ENCODE measurements at regions of chr11 and their contacts with region 1.

Region 1: DNA sequence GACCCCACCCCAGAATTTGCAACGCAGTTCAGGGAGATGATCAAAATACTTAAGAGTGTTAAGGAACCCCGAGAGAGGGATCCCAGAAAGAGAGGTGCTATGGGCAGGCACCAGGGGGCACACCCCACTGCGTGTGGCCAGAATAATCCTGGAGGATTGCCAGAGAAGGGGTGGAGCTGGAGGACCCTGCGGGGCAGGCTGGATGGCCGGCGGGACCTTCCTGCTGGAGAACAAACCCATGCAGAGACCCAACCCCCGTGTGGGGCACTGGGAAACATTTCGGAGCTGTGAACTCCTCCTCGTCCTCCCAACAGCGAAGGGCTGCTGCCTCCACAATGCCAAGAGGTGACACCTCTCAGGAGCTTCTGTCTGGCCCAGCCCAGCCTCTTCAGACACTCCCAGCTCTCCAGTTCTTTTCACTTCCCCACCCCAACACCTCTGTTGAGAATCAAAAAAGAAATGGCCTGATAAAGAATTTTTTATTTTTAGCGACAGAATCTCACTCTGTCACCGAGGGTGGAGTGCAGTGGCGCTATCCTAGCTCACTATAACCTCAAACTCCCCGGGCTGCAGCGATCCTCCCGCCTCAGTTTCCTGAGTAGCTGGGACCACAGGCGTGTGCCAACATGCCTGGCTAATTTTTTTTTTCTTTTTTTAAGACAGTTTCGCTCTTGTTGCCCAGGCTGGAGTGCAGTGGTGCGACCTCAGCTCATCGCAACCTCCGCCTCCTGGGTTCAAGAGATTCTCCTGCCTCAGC is 25.6 kb downstream of the RHOD start:
- DNase-seq: no peak
- ATAC-seq: peak; percentile 18 to 61 (median 34)
- H3K4me3 ChIP-seq: peak overlapping the region in 7 of 10 donors; percentile 7 to 34 (median 19)
- H3K27ac ChIP-seq: no peak overlapping the region
- H3K4me1 ChIP-seq: peaks cover 6 to 17% (median 12%) of the 10 kb centered on the region in 9 donors
- H3K27me3 ChIP-seq: peaks cover 0 to 6% (median 0%) of the 10 kb centered on the region in 7 donors
- CTCF ChIP-seq: no peak

Region 2: DNA sequence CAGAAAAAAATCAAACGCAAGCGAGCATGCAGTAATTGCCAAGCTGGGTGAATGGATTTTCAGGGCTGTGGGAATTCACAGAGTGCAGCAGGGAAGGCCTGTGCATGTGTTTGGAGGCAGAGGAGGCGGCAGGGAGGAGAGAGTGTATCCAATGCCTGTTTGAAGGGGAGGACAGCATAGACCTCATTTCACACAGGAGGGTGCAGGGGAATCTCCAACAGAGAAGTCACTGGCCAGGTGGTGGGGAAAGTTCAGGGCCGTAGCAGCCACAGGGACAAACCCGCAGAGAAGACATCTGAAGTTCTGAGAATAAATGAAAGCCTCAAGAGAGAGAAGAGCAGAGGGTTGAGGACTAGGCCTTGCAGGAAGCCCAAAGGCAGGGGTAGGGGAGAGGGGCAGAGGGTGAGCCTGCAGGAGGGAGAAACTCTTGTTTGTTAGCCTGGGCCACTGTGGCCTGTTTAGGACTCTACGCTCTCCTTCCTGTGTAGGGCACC is 17.7 kb after region 1 on chr11:
- intact Hi-C with region 1: loop called in 1 of 10 experiments (anchors 1 kb)
- DNase-seq: no peak
- ATAC-seq: no peak
- H3K4me3 ChIP-seq: no peak overlapping the region
- H3K27ac ChIP-seq: no peak overlapping the region
- H3K4me1 ChIP-seq: peaks cover 0 to 6% (median 0%) of the 10 kb centered on the region in 9 donors
- H3K27me3 ChIP-seq: no peaks in the 10 kb centered on the region
- CTCF ChIP-seq: no peak

Region 3: GRCh38 chr11:67160874-67161783 is 78.9 kb after region 1 on chr11:
- intact Hi-C with region 1: loop called in 6 of 10 experiments (anchors 5 to 10 kb)
- DNase-seq: no peak
- ATAC-seq: no peak
- H3K4me3 ChIP-seq: no peak overlapping the region
- H3K27ac ChIP-seq: no peak overlapping the region
- H3K4me1 ChIP-seq: peaks cover 0 to 37% (median 12%) of the 10 kb centered on the region in 9 donors
- H3K27me3 ChIP-seq: no peaks in the 10 kb centered on the region
- CTCF ChIP-seq: no peak

Region 4: DNA sequence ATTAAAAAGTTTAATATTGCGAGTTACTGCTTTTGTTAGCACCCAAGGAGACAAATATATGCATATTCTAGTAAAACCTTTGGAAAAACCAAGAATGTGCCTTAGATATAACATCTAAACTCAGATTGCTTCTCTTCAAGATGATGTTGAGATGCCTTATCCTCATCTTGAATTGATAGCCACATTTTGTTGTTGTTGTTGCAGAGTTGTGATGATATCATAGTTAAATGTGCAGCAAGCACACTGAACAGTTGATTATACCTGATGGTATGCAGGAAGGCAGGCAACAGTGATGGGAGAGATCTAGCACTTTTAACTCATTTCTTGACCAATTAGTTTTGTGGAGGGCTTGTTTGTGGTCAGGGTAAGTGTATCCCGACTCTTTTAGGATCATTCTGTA is 84.9 kb after region 1 on chr11:
- intact Hi-C with region 1: loop called (anchors 1 to 10 kb)
- DNase-seq: no peak
- ATAC-seq: no peak
- H3K4me3 ChIP-seq: no peak overlapping the region
- H3K27ac ChIP-seq: peak overlapping the region in 1 of 10 donors; percentile 40
- H3K4me1 ChIP-seq: peaks cover 3 to 35% (median 22%) of the 10 kb centered on the region in 9 donors
- H3K27me3 ChIP-seq: no peaks in the 10 kb centered on the region
- CTCF ChIP-seq: no peak

Region 5: GRCh38 chr11:67174311-67174710 is 92.1 kb after region 1 on chr11:
- intact Hi-C with region 1: loop called in 9 of 10 experiments (anchors 2 to 10 kb)
- DNase-seq: no peak
- ATAC-seq: no peak
- H3K4me3 ChIP-seq: no peak overlapping the region
- H3K27ac ChIP-seq: no peak overlapping the region
- H3K4me1 ChIP-seq: peaks cover 0 to 41% (median 15%) of the 10 kb centered on the region in 9 donors
- H3K27me3 ChIP-seq: no peaks in the 10 kb centered on the region
- CTCF ChIP-seq: no peak

Region 6: DNA sequence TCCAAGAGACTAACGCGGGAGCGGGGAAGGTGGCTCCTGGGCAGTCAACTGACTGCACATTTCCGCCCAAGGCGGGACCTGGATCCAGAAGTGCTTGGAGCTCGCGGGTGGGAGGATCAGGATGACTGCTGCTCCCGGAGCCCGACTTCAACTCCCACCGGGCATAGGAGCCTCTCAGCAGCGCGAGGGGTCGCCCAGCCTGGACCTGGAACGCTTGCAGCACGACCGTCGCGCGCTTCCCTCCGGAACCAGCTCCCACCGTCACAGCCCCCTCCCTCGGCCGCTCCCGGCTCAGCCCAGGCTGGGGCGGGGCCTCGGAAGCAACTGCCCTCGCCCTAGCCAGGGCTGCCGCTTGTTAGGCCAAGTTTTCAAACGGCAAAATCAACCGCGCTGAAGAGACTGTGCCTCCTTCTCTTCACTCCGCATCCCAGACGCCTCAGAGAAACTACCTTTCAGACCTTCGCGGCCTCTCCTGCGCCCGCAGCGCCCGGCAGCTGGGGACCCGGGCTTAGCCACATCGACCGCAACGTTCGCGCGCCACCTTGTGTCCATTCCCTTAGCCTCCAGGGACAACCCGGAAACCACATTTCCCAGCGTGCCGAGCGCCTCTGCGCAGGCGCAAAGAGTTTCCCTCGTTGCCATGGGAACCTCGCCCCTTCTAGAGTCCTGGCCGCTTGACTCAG is 235.1 kb after region 1 on chr11:
- intact Hi-C with region 1: loop called in 4 of 10 experiments (anchors 10 kb)
- DNase-seq: peak; percentile 96 to 97
- ATAC-seq: peak; percentile 93 to 97 (median 96)
- H3K4me3 ChIP-seq: peak overlapping the region; percentile 68 to 94 (median 78)
- H3K27ac ChIP-seq: peak overlapping the region; percentile 84 to 97 (median 94)
- H3K4me1 ChIP-seq: peaks cover 4 to 30% (median 19%) of the 10 kb centered on the region in 9 donors
- H3K27me3 ChIP-seq: no peaks in the 10 kb centered on the region
- CTCF ChIP-seq: peak; percentile 92 to 99 (median 97)

Region 7: DNA sequence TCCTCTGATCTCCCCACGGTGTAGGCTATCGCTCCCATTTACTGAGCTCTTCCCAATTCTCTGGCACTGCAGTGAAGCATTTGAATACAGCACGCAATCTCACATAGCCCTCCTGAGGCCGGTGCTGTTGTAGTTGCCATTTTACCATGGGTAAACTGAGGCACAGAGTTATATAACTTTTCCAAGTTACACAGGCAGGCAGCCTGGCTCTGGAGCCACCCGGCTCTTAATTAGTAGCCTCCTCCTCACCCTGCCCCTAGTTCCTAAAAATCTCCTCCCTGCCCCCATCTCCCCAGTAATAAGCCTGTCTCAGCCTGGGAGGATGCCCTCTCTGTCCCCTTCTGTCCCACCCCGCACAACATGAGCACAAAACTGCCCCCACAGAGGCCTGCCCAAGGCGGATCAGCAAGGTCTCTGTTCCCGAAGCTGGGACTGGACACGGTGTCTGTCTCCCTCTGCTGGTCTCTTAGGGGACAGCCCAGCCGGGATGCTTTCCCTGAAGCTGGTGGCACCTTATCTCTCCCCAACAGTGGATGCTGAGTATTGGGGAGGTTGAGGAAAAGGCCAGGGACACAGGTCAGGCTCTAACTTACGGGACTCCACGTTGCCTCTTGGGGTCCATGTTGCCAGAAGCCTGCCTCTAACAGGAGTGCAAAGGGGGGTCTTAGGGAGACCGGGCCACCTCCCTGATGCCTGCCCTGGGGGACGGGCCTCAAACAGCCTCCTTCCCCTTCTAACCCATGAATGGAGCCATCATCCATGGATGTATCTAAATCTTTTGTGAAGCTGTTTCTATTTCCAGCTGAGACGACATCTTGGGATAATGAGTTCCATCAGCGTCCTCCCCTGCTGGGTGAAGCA is 300.3 kb after region 1 on chr11:
- intact Hi-C with region 1: loop called in 1 of 10 experiments (anchors 5 kb)
- DNase-seq: peak; percentile 81
- ATAC-seq: peak; percentile 76 to 91 (median 88)
- H3K4me3 ChIP-seq: no peak overlapping the region
- H3K27ac ChIP-seq: no peak overlapping the region
- H3K4me1 ChIP-seq: peaks cover 0 to 44% (median 4%) of the 10 kb centered on the region in 9 donors
- H3K27me3 ChIP-seq: peaks cover 0 to 7% (median 0%) of the 10 kb centered on the region in 7 donors
- CTCF ChIP-seq: peak; percentile 92 to 99 (median 96)